ENCODE measurements at regions of chr3 and their contacts with region 1.

Region 1: GRCh38 chr3:69200384-69201068 is 78.1 kb upstream of the LMOD3 start:
- DNase-seq: peak; percentile 78
- ATAC-seq: peak; percentile 33
- H3K4me3 Mint-ChIP-seq: peak overlapping the region; percentile 74
- H3K27ac Mint-ChIP-seq: peak overlapping the region; percentile 89
- H3K4me1 Mint-ChIP-seq: peaks cover 78% of the 10 kb centered on the region
- H3K27me3 Mint-ChIP-seq: no peaks in the 10 kb centered on the region
- CTCF ChIP-seq: no peak

Region 2: GRCh38 chr3:69212411-69213139 is 12.0 kb after region 1 on chr3:
- CTCF ChIA-PET with region 1: interaction called, 56 read pairs
- POLR2A ChIA-PET with region 1: interaction called, 13 read pairs
- intact Hi-C with region 1: no loop called
- DNase-seq: no peak
- ATAC-seq: peak; percentile 88
- H3K4me3 Mint-ChIP-seq: no peak overlapping the region
- H3K27ac Mint-ChIP-seq: peak overlapping the region; percentile 65
- H3K4me1 Mint-ChIP-seq: peaks cover 48% of the 10 kb centered on the region
- H3K27me3 Mint-ChIP-seq: no peaks in the 10 kb centered on the region
- CTCF ChIP-seq: no peak

Region 3: DNA sequence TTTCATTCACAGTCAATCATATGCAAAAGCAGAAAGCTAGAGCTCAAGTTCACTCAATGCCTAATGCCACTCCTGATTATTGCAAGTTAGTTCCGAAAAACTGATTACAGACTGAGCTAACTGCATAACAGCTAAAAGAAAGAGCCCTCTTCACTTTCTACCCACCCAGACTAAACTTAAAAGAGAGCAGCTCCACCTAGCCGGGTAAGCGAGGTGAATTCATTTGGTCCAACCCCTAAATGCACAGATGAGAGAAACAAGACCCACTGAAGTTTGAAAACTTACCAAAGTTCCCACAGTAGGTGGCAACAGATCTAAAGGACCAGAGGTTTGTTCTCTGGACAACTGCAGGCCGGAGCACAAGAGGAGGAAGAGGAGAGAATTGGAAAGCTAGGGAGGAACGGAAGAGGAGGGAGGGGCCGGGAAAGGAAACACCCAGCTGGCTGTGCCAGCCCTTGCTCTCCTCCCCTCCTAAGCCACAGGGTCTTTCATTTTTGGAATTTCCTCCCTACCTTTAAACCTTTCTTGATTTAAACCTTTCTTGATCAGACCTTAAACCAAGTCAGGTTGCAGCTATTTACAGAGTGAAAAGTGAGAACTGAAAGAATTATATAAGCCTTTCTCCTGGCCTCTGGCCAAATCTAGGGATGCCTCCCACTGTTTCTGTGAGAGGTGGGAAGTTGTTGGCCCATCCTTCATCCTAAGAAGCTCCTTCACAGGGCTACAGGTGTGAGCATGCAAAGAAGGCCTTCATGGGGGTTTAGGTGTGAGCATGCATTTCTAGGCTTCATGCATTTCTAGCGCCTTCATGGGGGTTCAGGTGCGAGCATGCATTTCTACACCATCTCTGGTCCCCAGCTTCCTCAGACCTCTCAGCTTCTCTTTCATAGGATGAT is 36.5 kb after region 1 on chr3:
- CTCF ChIA-PET with region 1: interaction called, 6 read pairs
- POLR2A ChIA-PET with region 1: interaction called, 4 read pairs
- intact Hi-C with region 1: loop called (anchors 5 kb)
- DNase-seq: peak; percentile 18
- ATAC-seq: peak; percentile 51
- H3K4me3 Mint-ChIP-seq: no peak overlapping the region
- H3K27ac Mint-ChIP-seq: no peak overlapping the region
- H3K4me1 Mint-ChIP-seq: peaks cover 11% of the 10 kb centered on the region
- H3K27me3 Mint-ChIP-seq: no peaks in the 10 kb centered on the region
- CTCF ChIP-seq: no peak

Region 4: DNA sequence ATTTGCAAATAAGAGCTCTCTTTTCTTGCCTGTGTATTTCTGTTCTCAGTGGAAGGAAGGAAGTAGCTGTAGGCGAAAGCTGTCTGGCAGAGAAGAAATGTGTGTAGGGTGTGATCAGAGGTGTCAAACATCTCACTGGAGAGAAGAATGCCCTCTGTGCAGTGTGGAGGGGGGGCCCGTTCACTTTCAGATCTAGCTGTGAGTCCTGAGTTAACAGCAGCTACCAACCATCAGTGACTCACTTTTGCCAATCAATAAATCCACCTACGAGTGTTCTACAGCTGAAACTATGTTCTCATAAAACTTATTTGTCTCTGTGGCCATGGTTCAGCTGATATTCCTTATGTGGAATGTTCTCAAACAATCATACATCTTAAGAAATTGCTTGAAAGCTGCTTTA is 81.7 kb after region 1 on chr3:
- CTCF ChIA-PET with region 1: interaction called, 6 read pairs
- POLR2A ChIA-PET with region 1: interaction called, 5 read pairs
- intact Hi-C with region 1: loop called (anchors 2 kb)
- DNase-seq: peak; percentile 92
- ATAC-seq: peak; percentile 100
- H3K4me3 Mint-ChIP-seq: no peak overlapping the region
- H3K27ac Mint-ChIP-seq: peak overlapping the region; percentile 75
- H3K4me1 Mint-ChIP-seq: peaks cover 28% of the 10 kb centered on the region
- H3K27me3 Mint-ChIP-seq: no peaks in the 10 kb centered on the region
- CTCF ChIP-seq: no peak

Measured in activated CD8-positive, alpha-beta T cell treated with anti-CD3 and anti-CD28 coated beads for 36 hours (primary cell).